ENCODE measurements at regions of chr3 and their contacts with region 1.

Region 1: GRCh38 chr3:105862217-105862616 is 6.6 kb downstream of the CBLB start:
- DNase-seq: peak; percentile 69
- ATAC-seq: peak; percentile 80
- H3K4me3 ChIP-seq: peak overlapping the region; percentile 39
- H3K27ac ChIP-seq: peak overlapping the region; percentile 55
- H3K4me1 ChIP-seq: peaks cover 17% of the 10 kb centered on the region
- H3K27me3 ChIP-seq: no peaks in the 10 kb centered on the region
- CTCF ChIP-seq: no peak
- EP300 ChIP-seq: peak; percentile 79 to 90
- POLR2A ChIP-seq: no peak
- RAD21 ChIP-seq: peak; percentile 32; the same call in 1 of the 2 replicates

Region 2: GRCh38 chr3:105847452-105847851 is 14.8 kb before region 1 on chr3:
- CTCF ChIA-PET with region 1: interaction called, 7 read pairs
- POLR2A ChIA-PET with region 1: interaction called, 5 read pairs
- RAD21 ChIA-PET with region 1: interaction called, 8 read pairs
- SMC1A ChIA-PET with region 1: interaction called, 18 read pairs
- in situ Hi-C with region 1: no loop called
- intact Hi-C with region 1: no loop called
- DNase-seq: no peak
- ATAC-seq: peak; percentile 10; the same call in 1 of the 3 replicates
- H3K4me3 ChIP-seq: no peak overlapping the region
- H3K27ac ChIP-seq: no peak overlapping the region
- H3K4me1 ChIP-seq: no peaks in the 10 kb centered on the region
- H3K27me3 ChIP-seq: no peaks in the 10 kb centered on the region
- CTCF ChIP-seq: no peak
- EP300 ChIP-seq: no peak
- POLR2A ChIP-seq: no peak
- RAD21 ChIP-seq: no peak

Region 3: GRCh38 chr3:105938101-105938500 is 75.9 kb after region 1 on chr3:
- CTCF ChIA-PET with region 1: no interaction called
- POLR2A ChIA-PET with region 1: no interaction called
- RAD21 ChIA-PET with region 1: no interaction called
- SMC1A ChIA-PET with region 1: no interaction called
- in situ Hi-C with region 1: no loop called
- intact Hi-C with region 1: no loop called
- DNase-seq: no peak
- ATAC-seq: no peak
- H3K4me3 ChIP-seq: no peak overlapping the region
- H3K27ac ChIP-seq: no peak overlapping the region
- H3K4me1 ChIP-seq: no peaks in the 10 kb centered on the region
- H3K27me3 ChIP-seq: no peaks in the 10 kb centered on the region
- CTCF ChIP-seq: no peak
- EP300 ChIP-seq: no peak
- POLR2A ChIP-seq: no peak
- RAD21 ChIP-seq: no peak

Measured in GM12878 (cell line).